ENCODE measurements at regions of chr4 and their contacts with region 1.

Region 1: GRCh38 chr4:27176400-27176799 is 315.8 kb downstream of the STIM2 start:
- DNase-seq: peak; percentile 43
- ATAC-seq: peak; percentile 95
- H3K4me3 Mint-ChIP-seq: no peak overlapping the region
- H3K27ac Mint-ChIP-seq: no peak overlapping the region
- H3K4me1 Mint-ChIP-seq: peaks cover 8% of the 10 kb centered on the region; the same call in 1 of the 2 replicates
- H3K27me3 Mint-ChIP-seq: no peaks in the 10 kb centered on the region; the same call in 1 of the 2 replicates
- CTCF ChIP-seq: peak; percentile 15; the same call in 1 of the 2 replicates

Region 2: GRCh38 chr4:26992657-26993361 is 183.6 kb before region 1 on chr4:
- CTCF ChIA-PET with region 1: no interaction called
- POLR2A ChIA-PET with region 1: no interaction called
- DNase-seq: no peak
- ATAC-seq: no peak
- H3K4me3 Mint-ChIP-seq: no peak overlapping the region
- H3K27ac Mint-ChIP-seq: no peak overlapping the region
- H3K4me1 Mint-ChIP-seq: no peaks in the 10 kb centered on the region
- H3K27me3 Mint-ChIP-seq: no peaks in the 10 kb centered on the region
- CTCF ChIP-seq: no peak

Region 3: GRCh38 chr4:27010334-27010940 is 166.0 kb before region 1 on chr4:
- CTCF ChIA-PET with region 1: no interaction called
- POLR2A ChIA-PET with region 1: no interaction called
- DNase-seq: peak; percentile 47
- ATAC-seq: peak; percentile 84
- H3K4me3 Mint-ChIP-seq: no peak overlapping the region
- H3K27ac Mint-ChIP-seq: no peak overlapping the region
- H3K4me1 Mint-ChIP-seq: no peaks in the 10 kb centered on the region
- H3K27me3 Mint-ChIP-seq: no peaks in the 10 kb centered on the region
- CTCF ChIP-seq: peak; percentile 65

Region 4: DNA sequence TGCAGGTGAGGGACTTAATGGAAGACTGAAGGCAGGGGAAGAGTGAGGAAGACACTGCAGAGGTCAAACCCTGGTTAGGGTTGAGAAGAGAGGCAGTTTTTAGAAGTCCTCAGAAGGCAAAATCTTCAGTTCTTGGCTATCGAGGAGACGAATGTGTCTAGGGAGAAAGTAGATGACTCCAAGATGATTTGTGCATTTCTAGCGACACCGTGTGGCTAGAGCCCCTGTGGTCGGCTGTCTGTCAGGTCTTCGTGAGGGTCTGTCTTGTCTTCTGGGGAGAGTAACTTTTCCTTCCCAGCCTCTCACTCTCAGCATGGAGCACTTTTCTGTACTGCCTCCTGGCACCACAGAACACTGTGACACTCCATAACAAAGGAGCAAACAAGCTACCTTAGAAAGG is 142.3 kb after region 1 on chr4:
- CTCF ChIA-PET with region 1: interaction called, 33 read pairs
- POLR2A ChIA-PET with region 1: no interaction called
- DNase-seq: peak; percentile 79
- ATAC-seq: peak; percentile 96
- H3K4me3 Mint-ChIP-seq: no peak overlapping the region
- H3K27ac Mint-ChIP-seq: no peak overlapping the region
- H3K4me1 Mint-ChIP-seq: peaks cover 18% of the 10 kb centered on the region
- H3K27me3 Mint-ChIP-seq: no peaks in the 10 kb centered on the region
- CTCF ChIP-seq: 0 out of 2 replicates have a peak, but pooled peaks have one; percentile 23

Measured in WTC11 (cell line).